MCF 10A (cell line): ENCODE measurements at regions of chr11 and their contacts with region 1.

Region 1: GRCh38 chr11:35943713-35944655 is at the start of gene LDLRAD3:
- DNase-seq: peak; percentile 86
- H3K4me3 Mint-ChIP-seq: peak within 1 kb of the TSS; percentile 93
- H3K27ac Mint-ChIP-seq: peak within 1 kb of the TSS; percentile 73
- H3K4me1 Mint-ChIP-seq: peaks cover 37% of the 10 kb centered on the region
- H3K27me3 Mint-ChIP-seq: no peaks in the 10 kb centered on the region
- CTCF ChIP-seq: no peak
- total RNA-seq, gene LDLRAD3: 39.2 and 55.7 TPM in 2 replicates

Region 2: GRCh38 chr11:35893796-35894475 is 50.0 kb before region 1 on chr11:
- CTCF ChIA-PET with region 1: no interaction called
- POLR2A ChIA-PET with region 1: interaction called, 20 read pairs
- intact Hi-C with region 1: no loop called
- DNase-seq: peak; percentile 97
- H3K4me3 Mint-ChIP-seq: peak overlapping the region; percentile 31
- H3K27ac Mint-ChIP-seq: peak overlapping the region; percentile 33
- H3K4me1 Mint-ChIP-seq: peaks cover 33% of the 10 kb centered on the region
- H3K27me3 Mint-ChIP-seq: no peaks in the 10 kb centered on the region
- CTCF ChIP-seq: no peak

Region 3: DNA sequence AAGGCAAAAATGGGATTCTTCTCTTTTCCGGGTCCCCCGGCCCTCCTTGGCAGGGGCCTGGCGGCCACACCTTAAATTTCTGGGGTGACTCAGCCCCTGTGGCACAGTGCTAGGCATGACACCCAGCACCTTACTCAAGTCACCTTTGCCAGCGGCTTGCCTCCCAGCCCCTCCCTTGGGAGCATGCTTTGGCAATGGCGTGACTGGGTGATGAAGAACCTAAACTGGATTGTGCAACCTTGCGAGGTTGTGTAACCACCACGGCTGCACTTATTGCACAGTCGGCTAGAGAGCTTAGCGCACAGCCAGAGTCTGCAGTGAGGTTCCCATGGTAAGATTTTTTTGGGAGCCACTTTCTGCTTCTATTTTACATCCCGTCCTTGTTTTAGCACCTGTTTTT is 16.3 kb before region 1 on chr11:
- CTCF ChIA-PET with region 1: no interaction called
- POLR2A ChIA-PET with region 1: interaction called, 20 read pairs
- intact Hi-C with region 1: no loop called
- DNase-seq: peak; percentile 99
- H3K4me3 Mint-ChIP-seq: peak overlapping the region; percentile 29
- H3K27ac Mint-ChIP-seq: peak overlapping the region; percentile 91
- H3K4me1 Mint-ChIP-seq: peaks cover 18% of the 10 kb centered on the region
- H3K27me3 Mint-ChIP-seq: no peaks in the 10 kb centered on the region
- CTCF ChIP-seq: no peak

Region 4: DNA sequence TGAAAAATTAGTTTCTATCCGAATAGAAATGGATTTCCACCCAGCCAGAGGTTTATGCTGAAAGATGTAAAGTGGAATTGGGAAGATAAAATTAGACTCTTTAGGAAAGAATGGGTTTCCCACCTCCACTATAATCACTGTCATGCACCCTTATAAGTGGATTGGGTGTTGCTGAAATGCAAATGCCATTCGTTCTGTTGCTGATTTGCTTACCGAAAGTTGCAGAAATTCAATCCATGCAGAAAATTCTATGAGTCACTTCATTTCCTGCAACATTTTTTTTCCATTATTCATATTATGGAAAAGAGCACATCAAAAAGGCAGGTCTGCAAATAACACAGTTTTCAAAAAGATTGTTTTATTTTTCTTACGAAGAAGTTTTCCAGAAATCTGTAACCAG is 65.5 kb after region 1 on chr11:
- CTCF ChIA-PET with region 1: interaction called, 3 read pairs
- POLR2A ChIA-PET with region 1: interaction called, 4 read pairs
- intact Hi-C with region 1: loop called (anchors 2 kb)
- DNase-seq: peak; percentile 70
- H3K4me3 Mint-ChIP-seq: peak overlapping the region; percentile 66
- H3K27ac Mint-ChIP-seq: peak overlapping the region; percentile 78
- H3K4me1 Mint-ChIP-seq: peaks cover 60% of the 10 kb centered on the region
- H3K27me3 Mint-ChIP-seq: no peaks in the 10 kb centered on the region
- CTCF ChIP-seq: no peak

Region 5: DNA sequence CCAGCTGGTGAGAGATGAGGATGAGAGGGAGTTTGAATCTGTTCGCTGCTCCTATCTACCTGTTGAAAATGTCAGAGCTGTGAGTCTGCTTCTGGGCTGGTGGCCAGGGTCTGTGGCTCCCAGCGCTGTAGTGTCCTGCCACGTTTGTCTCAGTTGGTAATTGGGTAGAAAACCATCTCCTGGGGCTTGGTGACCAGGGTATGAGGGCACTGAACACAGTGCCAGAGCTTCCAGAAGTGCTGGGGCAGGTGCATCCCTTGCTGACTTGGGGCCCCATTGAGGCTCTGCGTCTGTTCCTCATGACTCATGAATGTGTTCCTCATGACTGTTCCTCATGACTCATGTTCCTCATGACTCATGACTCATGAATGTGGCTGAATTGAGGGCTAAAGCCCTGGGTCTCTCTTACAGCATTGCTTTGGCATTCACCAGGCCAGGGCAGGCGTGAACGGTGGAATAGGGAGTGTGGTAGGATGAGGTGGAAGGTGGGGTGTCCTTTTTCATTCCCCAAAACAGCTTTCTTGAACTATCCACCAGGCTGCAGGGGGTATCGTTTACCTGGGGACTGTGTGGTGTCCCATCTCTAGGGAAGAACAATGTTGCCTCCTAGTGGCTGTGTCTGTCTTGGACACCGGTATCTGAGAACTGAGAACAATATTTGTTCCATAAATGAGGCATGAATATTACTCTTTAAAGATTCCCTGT is 205.7 kb after region 1 on chr11:
- CTCF ChIA-PET with region 1: no interaction called
- POLR2A ChIA-PET with region 1: no interaction called
- intact Hi-C with region 1: loop called (anchors 5 kb)
- DNase-seq: peak; percentile 100
- H3K4me3 Mint-ChIP-seq: peak overlapping the region; percentile 29
- H3K27ac Mint-ChIP-seq: peak overlapping the region; percentile 82
- H3K4me1 Mint-ChIP-seq: peaks cover 42% of the 10 kb centered on the region
- H3K27me3 Mint-ChIP-seq: no peaks in the 10 kb centered on the region
- CTCF ChIP-seq: peak; percentile 80